ENCODE measurements at regions of chrX and their contacts with region 1.

Region 1: DNA sequence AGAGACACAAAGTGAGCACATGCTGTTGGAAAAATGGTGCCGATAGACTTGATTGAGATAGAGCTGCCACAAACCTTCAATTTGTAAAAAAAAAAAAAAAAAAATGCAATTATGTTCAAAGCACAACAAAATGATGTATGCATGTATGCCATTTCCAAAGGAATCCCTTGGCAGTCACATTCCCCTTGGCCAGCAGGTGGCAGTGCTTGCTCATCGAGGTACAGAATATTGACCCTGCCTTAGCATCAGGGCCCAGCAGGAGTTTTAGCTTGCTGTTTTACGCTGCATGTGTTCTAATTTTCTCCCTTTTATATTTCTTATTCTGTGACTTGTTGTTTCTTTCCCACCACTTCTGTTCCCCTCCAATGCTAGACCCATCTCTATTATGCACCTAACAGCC is 34.5 kb upstream of the CYBB start:
- DNase-seq: peak; percentile 48 to 87 (median 78)

Region 2: GRCh38 chrX:37824505-37825208 is 79.3 kb after region 1 on chrX:
- intact Hi-C with region 1: loop called (anchors 5 kb)
- DNase-seq: no peak

Region 3: GRCh38 chrX:38175140-38175539 is 429.8 kb after region 1 on chrX:
- intact Hi-C with region 1: loop called (anchors 10 kb)
- DNase-seq: peak in 34 of 42 donors; percentile 1 to 67 (median 30)